Activated T-helper 2 cell treated with anti-CD3 and anti-CD28 coated beads, Interferon-gamma antibody, Interleukin-2, Interleukin-4, amounts not matched to agents 10 μg/mL and 5 μg/mL and 100 μg/mL, durations not matched to agents 14 hours and 24 hours and 36 hours (primary cell): ENCODE measurements at regions of chr14 and their contacts with region 1.

Region 1: GRCh38 chr14:91510174-91511042 is at the start of gene PPP4R3A:
- DNase-seq: peak; percentile 94
- H3K4me3 Mint-ChIP-seq: peak within 1 kb of the TSS; percentile 97
- H3K27ac Mint-ChIP-seq: peak within 1 kb of the TSS; percentile 99
- H3K4me1 Mint-ChIP-seq: peaks cover 21% of the 10 kb centered on the region
- H3K27me3 Mint-ChIP-seq: peaks cover 2% of the 10 kb centered on the region
- total RNA-seq, gene PPP4R3A: 104 and 121 TPM in 2 replicates

Region 2: GRCh38 chr14:91323671-91324605 is 186.5 kb before region 1 on chr14:
- intact Hi-C with region 1: loop called (anchors 2 kb)
- DNase-seq: peak; percentile 84
- H3K4me3 Mint-ChIP-seq: peak overlapping the region; percentile 75
- H3K27ac Mint-ChIP-seq: peak overlapping the region; percentile 99
- H3K4me1 Mint-ChIP-seq: peaks cover 47% of the 10 kb centered on the region
- H3K27me3 Mint-ChIP-seq: no peaks in the 10 kb centered on the region

Region 3: DNA sequence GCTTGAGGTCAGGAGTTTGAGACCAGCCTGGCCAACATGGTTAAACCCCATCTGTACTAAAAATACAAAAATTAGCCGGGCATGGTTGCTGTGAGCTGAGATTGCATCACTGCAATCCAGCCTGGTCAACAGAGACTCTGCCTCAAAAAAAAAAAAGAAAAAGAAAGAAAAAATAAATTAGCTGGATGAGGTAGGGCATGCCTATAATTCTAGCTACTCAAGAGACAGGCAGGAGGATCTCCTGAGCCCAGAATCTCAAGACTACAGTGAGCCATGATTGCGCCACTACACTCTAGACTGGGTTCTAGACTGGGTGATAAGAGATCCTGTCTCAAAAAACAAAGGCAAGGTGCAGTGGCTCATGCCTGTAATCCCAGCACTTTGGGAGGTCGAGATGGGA is 17.2 kb before region 1 on chr14:
- intact Hi-C with region 1: loop called (anchors 2 kb)
- DNase-seq: no peak
- H3K4me3 Mint-ChIP-seq: no peak overlapping the region
- H3K27ac Mint-ChIP-seq: no peak overlapping the region
- H3K4me1 Mint-ChIP-seq: peaks cover 47% of the 10 kb centered on the region
- H3K27me3 Mint-ChIP-seq: no peaks in the 10 kb centered on the region

Region 4: DNA sequence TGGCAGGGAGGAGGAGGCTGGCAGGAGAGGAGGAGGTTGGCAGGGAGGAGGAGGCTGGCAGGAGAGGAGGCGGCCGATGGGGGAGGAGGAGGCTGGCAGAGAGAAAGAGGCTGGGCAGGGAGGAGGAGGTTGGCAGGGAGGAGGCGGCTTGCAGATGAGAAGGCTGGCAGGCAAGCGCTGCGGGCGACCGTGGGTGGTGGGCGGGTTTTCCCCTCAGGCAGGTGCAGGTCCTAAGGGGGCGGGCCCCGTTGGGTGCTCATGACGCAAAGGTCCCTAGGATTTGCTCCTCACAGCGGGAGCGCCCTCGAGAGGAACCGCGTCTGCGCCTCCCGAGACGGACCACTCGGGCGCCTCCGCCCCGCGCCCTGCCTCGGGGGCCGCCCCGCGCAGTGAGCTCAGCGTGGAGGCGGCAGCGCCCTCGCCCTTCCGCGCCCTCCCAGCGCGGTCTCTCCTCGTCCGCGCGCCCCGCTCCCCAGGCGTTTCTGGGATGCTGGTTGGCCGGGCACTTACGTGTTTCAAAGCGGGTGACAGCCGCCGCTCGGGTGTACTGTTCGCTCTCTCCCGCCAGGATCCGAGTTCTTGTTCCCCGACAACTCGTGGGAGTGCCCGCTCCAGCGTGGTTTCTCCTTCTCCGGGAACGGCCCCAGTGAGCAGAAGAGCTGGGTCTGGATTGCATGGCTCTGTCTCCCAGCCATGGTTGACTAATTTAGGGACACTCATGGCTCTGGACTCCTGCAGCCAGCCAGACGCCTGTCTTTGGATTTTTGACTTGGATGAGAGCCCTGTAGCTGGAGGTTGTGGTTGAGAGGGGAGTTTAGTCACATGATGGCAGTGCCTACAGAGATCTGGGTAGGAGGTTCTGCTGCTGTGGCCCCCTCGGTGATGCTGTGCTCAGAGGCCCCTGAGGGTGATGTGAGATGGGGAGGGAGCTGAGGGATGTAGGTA is 63.8 kb after region 1 on chr14:
- intact Hi-C with region 1: loop called (anchors 2 kb)
- DNase-seq: peak; percentile 32
- H3K4me3 Mint-ChIP-seq: peak overlapping the region; percentile 72
- H3K27ac Mint-ChIP-seq: no peak overlapping the region
- H3K4me1 Mint-ChIP-seq: peaks cover 16% of the 10 kb centered on the region
- H3K27me3 Mint-ChIP-seq: peaks cover 24% of the 10 kb centered on the region

Region 5: DNA sequence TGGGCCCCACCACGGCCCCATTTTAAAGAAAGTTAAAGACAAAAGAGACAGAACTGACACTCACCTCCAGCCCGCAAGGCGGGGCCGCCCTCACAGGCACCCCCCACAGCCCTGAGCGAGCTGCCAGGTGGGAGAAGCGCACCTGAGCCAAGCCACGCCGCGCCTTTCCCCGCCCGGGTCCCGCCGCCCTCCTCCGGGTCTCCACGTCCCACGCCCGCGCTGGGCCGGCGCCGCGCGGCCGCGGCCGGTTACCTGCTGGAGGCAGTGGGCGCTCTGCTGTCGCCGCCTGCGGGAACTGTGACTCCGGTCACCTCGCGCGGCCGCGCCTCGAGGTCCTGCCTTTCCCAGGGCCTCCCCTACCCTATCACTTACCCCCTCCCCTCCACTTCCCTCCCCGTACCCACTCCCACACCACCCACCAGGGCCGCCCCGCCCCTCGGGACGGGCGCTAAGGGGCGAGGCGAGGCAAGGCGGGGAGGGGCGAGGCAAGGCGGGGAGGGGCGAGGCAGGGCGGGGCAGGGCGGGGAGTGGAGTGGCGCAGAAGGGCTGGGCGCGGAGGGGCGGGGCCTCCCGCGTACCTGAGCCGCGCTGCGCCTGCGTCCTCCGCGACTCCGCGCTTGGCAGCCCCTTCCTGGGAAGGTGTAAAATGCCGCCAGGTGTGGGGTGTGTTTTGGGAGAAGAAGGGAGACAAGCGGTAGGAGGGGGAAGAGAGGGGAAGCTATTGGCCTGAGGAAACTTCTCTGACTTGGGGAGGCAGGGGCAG is 325.9 kb after region 1 on chr14:
- intact Hi-C with region 1: loop called (anchors 10 kb)
- DNase-seq: peak; percentile 52
- H3K4me3 Mint-ChIP-seq: peak overlapping the region; percentile 91
- H3K27ac Mint-ChIP-seq: peak overlapping the region; percentile 48
- H3K4me1 Mint-ChIP-seq: peaks cover 43% of the 10 kb centered on the region
- H3K27me3 Mint-ChIP-seq: peaks cover 10% of the 10 kb centered on the region

Region 6: DNA sequence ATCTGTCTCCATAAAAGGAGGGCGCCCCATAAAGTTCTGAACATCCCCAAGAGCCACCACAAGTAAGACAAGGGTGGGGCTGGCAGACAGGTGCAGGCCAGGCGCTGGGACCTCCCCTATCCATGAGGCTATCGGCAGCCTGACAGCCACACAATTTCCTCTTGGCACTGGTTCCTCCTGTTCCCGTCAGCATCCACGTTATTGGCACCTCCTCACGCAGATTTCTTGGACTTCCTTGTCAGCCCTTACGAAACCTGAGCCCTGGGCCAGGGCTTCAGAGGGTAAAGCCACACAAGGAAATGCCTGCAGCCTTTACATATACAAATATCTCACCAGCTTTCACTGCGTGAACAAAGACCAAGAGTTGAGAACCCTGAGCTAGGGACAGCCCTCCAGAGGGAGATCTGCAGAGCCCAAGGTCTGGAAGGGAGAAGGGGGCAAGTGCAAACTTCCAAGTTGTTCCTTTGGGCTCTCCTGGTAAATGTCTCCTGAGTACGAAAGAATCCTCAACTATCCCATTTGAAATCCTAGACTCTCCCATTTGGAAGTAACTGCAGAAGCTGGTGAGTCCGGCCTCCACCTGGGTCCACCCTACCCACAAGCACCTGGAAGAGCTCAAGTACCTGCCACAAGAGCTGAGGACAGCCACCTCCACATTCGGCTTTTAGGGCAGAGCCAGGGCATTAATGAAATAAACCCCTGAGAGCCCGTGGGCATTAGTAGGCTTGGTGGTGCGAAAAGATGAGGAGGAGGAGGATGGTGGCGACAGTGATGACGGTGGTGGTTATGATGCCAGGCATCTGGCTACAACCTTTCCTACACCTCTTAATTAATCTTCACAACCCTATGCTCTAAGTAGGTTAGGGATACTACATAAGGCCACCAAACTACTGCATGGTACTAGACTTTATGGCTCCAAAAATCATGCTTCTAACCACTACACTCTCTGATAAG is 362.4 kb after region 1 on chr14:
- intact Hi-C with region 1: loop called (anchors 2 kb)
- DNase-seq: no peak
- H3K4me3 Mint-ChIP-seq: peak overlapping the region; percentile 71
- H3K27ac Mint-ChIP-seq: peak overlapping the region; percentile 90
- H3K4me1 Mint-ChIP-seq: peaks cover 93% of the 10 kb centered on the region
- H3K27me3 Mint-ChIP-seq: no peaks in the 10 kb centered on the region

Region 7: GRCh38 chr14:92039719-92040430 is 529.5 kb after region 1 on chr14 and contains the start of gene TRIP11:
- intact Hi-C with region 1: loop called (anchors 1 kb)
- DNase-seq: peak; percentile 93
- H3K4me3 Mint-ChIP-seq: peak within 1 kb of the TSS; percentile 97
- H3K27ac Mint-ChIP-seq: peak within 1 kb of the TSS; percentile 99
- H3K4me1 Mint-ChIP-seq: peaks cover 27% of the 10 kb centered on the region
- H3K27me3 Mint-ChIP-seq: no peaks in the 10 kb centered on the region
- total RNA-seq, gene TRIP11: 37.0 and 41.7 TPM in 2 replicates